Activated T-helper 1 cell treated with anti-CD3 and anti-CD28 coated beads, Interleukin-12 subunit alpha, Interleukin-12 subunit beta, Interleukin-2, Interleukin-4 antibody, amounts not matched to agents 30 ng/mL and 10 ng/mL and 1 ng/mL, durations not matched to agents 14 hours and 24 hours and 36 hours (primary cell): ENCODE measurements at regions of chr5 and their contacts with region 1.

Region 1: GRCh38 chr5:150140830-150141229 is 14.8 kb downstream of the PDGFRB start:
- DNase-seq: no peak
- H3K4me3 Mint-ChIP-seq: no peak overlapping the region
- H3K27ac Mint-ChIP-seq: no peak overlapping the region
- H3K4me1 Mint-ChIP-seq: peaks cover 17% of the 10 kb centered on the region
- H3K27me3 Mint-ChIP-seq: peaks cover 3% of the 10 kb centered on the region

Region 2: DNA sequence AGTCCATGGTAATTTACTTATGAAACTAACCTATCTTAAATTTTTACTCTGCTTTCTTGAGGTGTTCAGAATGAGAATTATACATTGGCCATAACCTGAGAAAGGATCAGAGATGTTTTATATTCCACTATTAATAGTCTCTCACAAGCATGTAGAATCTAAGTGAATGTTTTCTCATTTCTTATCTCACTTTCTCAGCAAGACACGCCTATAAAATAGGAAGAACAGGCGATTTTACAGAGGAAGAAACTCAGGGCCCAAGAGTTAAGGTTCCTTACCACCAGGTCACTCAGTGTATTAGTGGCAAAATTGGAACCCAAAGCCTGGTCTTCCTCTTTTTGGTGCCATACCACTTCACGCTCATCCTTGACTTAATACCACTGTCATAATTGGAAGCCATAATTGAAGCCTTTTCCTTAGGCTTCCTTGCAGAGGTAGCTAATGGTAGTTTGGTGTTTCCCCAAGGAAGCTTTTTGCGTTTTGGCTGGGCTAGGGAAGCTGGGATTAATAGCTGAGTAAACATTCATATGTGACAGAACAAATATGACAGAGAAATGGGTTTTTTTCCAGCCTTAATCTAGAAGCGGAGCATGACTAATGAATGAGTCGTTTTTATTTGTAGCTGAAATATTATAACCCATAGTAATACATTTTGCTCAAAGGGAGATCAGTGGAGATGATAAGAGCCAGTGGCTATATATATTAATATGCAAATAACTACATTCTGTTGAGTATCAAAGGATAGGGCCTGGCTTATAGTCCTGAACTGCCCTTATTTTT is 123.4 kb before region 1 on chr5:
- intact Hi-C with region 1: no loop called
- DNase-seq: no peak
- H3K4me3 Mint-ChIP-seq: no peak overlapping the region
- H3K27ac Mint-ChIP-seq: no peak overlapping the region
- H3K4me1 Mint-ChIP-seq: peaks cover 30% of the 10 kb centered on the region
- H3K27me3 Mint-ChIP-seq: no peaks in the 10 kb centered on the region

Region 3: GRCh38 chr5:150036513-150036912 is 104.3 kb before region 1 on chr5:
- intact Hi-C with region 1: no loop called
- DNase-seq: no peak
- H3K4me3 Mint-ChIP-seq: no peak overlapping the region
- H3K27ac Mint-ChIP-seq: no peak overlapping the region
- H3K4me1 Mint-ChIP-seq: no peaks in the 10 kb centered on the region
- H3K27me3 Mint-ChIP-seq: no peaks in the 10 kb centered on the region

Region 4: GRCh38 chr5:150119421-150120061 is 21.3 kb before region 1 on chr5:
- intact Hi-C with region 1: loop called (anchors 1 kb)
- DNase-seq: no peak
- H3K4me3 Mint-ChIP-seq: no peak overlapping the region
- H3K27ac Mint-ChIP-seq: no peak overlapping the region
- H3K4me1 Mint-ChIP-seq: no peaks in the 10 kb centered on the region
- H3K27me3 Mint-ChIP-seq: no peaks in the 10 kb centered on the region

Region 5: GRCh38 chr5:150263801-150264621 is 123.2 kb after region 1 on chr5:
- intact Hi-C with region 1: no loop called
- DNase-seq: no peak
- H3K4me3 Mint-ChIP-seq: no peak overlapping the region
- H3K27ac Mint-ChIP-seq: no peak overlapping the region
- H3K4me1 Mint-ChIP-seq: no peaks in the 10 kb centered on the region
- H3K27me3 Mint-ChIP-seq: no peaks in the 10 kb centered on the region